Psoas muscle (tissue), 8 donors: ENCODE measurements at regions of chr4 and their contacts with region 1.

Region 1: DNA sequence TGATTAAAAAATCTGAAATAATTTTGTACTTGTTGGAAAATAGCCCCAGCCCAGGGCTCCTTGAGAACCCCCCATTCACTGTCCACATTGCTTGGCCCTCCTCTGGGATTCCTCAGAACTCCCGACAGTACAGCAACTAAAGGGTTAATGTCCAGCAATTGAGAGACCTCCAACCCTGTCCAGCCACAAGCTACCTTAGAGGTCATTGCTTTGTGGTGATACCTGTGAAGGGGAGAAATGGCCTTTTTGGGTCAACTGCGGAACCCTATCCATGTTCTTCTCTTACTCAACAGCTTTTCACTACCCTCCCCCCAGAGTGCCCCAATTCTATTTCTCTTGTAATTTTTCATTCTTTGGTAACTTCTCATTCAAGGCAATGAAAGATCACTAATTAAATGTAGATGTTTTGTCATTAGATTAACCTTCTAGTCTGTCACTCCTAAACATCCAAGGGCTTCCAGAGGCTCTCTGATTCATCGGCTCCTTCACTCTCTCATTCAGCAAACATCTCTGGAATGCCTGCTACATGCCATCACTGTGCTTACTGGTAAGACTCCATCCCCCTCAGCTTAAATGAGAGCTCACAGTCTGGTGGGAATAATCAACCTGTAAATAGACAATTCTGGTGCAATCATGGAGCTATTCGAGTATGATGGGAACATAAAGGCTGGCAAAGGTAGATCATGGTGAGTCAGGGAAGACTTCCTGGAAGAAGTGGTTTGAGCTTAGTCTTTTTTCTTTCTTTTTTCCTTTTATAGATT is 241.4 kb upstream of the PGRMC2 start:
- DNase-seq: no peak
- ATAC-seq: peak; percentile 99 to 100 (median 100)
- H3K4me3 ChIP-seq: no peak overlapping the region
- H3K27ac ChIP-seq: peak overlapping the region; percentile 75
- H3K4me1 ChIP-seq: peaks cover 13% of the 10 kb centered on the region
- H3K27me3 ChIP-seq: no peaks in the 10 kb centered on the region
- CTCF ChIP-seq: no peak

Region 2: GRCh38 chr4:128310266-128310697 is 218.7 kb before region 1 on chr4:
- intact Hi-C with region 1: no loop called
- DNase-seq: peak in 1 of 2 donors; percentile 58
- ATAC-seq: peak; percentile 75 to 88 (median 79)
- H3K4me3 ChIP-seq: no peak overlapping the region
- H3K27ac ChIP-seq: no peak overlapping the region
- H3K4me1 ChIP-seq: peaks cover 8% of the 10 kb centered on the region
- H3K27me3 ChIP-seq: no peaks in the 10 kb centered on the region
- CTCF ChIP-seq: peak; percentile 34

Region 3: DNA sequence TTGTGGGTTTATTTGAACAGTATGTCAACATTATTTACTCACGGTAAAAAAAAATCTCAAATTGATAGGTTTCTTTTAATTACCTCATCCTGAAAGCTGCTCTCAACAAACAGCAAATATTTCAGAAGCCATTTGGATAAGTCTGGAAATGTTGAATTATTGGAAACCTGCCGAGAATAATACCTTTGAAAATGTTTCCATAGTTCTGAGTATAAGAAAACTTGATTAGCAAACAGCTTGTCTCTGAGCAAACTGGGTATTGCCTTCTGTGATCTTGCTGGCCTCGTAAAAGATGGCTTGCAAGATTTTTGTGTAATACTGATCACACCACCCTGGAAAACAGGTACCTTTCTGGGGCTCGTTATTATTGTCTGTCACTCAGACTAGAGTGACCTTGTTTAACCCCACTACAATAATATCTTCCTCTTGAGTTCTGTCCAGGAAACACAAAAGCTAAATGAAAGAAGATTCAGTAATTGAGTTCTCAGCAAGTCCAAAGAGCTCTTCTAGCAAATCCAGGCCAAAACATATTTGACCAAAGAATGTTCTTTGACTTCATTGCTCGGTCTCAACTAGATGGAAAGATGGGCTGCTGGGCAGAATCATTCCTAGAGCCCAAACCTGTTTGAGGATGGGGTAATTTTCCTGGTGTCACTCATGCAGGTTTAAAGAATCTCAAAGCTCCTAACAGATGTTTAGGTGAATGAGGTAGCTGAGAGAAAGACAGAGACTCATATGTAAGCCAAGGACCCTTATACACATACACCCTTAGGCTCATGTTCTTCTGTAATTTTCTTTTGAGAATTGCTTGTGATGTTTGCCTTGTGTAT is 24.9 kb after region 1 on chr4:
- intact Hi-C with region 1: loop called in 1 of 2 experiments (anchors 2 kb)
- DNase-seq: no peak
- ATAC-seq: peak in 3 of 4 donors; percentile 18 to 39 (median 29)
- H3K4me3 ChIP-seq: peak overlapping the region; percentile 82
- H3K27ac ChIP-seq: peak overlapping the region; percentile 98
- H3K4me1 ChIP-seq: peaks cover 15% of the 10 kb centered on the region
- H3K27me3 ChIP-seq: no peaks in the 10 kb centered on the region
- CTCF ChIP-seq: no peak